ENCODE measurements at regions of chr10 and their contacts with region 1.

Region 1: DNA sequence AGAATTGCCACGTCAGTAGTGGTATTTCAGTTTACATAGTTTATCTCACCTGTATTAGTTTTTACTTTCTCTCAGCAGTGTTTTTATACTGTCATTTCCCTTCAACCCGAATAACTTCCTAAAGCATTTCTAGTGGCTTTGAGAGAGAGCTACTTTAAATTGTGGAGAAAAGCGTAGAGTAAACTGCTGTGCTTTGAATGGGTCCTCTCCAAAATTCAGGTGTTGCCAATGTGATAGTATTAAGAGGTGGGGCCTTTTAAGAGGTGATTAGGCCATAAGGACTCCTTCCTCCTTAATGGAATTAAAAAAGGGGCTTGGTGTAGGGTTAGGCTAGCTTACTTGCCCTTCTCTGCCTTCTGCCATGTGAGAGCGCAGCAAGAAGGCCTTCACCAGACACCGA is 98.4 kb downstream of the LCOR start:
- DNase-seq: no peak
- ATAC-seq: no peak
- H3K4me3 ChIP-seq: no peak overlapping the region
- H3K27ac ChIP-seq: no peak overlapping the region
- H3K4me1 ChIP-seq: no peaks in the 10 kb centered on the region
- H3K27me3 ChIP-seq: no peaks in the 10 kb centered on the region
- CTCF ChIP-seq: no peak

Region 2: DNA sequence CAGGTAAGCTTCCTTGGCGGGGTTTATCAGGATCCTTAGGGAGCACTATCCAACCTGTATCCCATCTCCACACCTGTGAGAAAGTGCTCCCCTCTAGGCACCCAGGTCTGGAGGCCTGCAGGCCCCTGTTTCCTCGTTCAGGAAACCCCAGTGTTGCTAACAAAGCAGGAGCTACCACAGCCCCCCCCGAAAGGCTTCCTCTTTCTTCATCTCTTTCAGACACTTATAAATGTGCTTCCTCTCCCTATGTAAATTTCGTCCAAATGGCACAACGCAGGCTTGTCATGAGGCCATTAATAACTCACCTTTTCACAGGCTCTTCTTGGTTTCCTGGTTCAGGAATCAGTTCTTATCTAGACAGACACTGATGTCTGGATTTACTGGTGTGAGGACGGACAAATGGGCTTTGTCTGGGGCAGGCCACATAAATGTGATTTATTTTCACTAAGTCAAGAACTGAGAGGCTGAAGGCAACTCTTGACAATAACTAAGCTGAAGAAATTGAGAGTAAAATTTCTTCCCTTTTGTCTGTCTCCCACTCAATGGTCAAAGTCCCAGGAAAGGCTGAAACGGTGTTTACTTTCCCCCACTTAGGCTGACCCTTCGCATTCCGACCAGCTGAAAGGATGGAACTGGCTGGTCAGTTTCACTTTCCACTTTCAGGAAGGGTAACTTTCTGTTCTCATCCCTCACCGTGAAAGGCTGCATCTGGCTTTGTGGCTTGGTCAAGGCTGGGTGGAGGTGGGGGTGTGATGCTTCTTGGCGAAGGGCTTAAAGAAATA is 257.0 kb before region 1 on chr10:
- CTCF ChIA-PET with region 1: no interaction called
- POLR2A ChIA-PET with region 1: interaction called, 10 read pairs
- in situ Hi-C with region 1: no loop called
- intact Hi-C with region 1: no loop called
- DNase-seq: no peak
- ATAC-seq: peak; percentile 47; the same call in 1 of the 2 replicates
- H3K4me3 ChIP-seq: peak overlapping the region in 1 of 2 experiments; percentile 0; a peak in 1 of 4 replicates
- H3K27ac ChIP-seq: peak overlapping the region; percentile 11; the same call in 1 of the 2 replicates
- H3K4me1 ChIP-seq: peaks cover 23% of the 10 kb centered on the region
- H3K27me3 ChIP-seq: no peaks in the 10 kb centered on the region
- CTCF ChIP-seq: no peak

Region 3: DNA sequence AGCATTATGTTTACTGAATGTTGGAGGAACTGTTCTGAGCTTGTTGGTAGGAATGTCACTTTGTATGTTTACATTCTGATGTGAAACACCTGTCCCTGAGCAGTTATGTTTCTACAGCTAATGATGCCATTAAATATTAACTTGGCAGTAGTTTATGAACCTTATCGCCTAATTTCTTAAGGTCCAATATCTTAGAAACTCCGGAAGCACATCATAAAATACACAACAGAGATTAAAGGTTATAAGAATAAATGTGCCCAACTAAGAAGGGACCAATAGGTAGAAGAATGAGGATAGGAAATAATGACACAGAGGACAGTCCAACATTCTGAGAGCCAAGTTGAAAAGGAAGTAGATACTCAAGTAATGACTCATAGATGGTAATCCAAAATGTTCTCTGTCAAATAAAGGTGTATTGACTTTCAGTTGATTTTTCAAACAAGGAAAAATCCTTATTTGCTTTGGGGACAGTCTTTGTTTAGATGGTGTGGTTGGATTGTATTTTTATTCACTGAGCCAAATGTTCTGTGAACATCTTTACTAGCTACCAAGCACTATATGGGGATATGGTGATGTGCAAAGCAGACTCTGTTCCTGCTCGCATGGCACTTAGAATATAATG is 66.4 kb before region 1 on chr10:
- CTCF ChIA-PET with region 1: no interaction called
- POLR2A ChIA-PET with region 1: interaction called, 14 read pairs
- in situ Hi-C with region 1: no loop called
- intact Hi-C with region 1: no loop called
- DNase-seq: peak; percentile 67
- ATAC-seq: peak; percentile 88
- H3K4me3 ChIP-seq: no peak overlapping the region
- H3K27ac ChIP-seq: no peak overlapping the region
- H3K4me1 ChIP-seq: peaks cover 17% of the 10 kb centered on the region
- H3K27me3 ChIP-seq: no peaks in the 10 kb centered on the region
- CTCF ChIP-seq: no peak

Region 4: GRCh38 chr10:97222326-97222961 is 292.0 kb after region 1 on chr10:
- CTCF ChIA-PET with region 1: no interaction called
- POLR2A ChIA-PET with region 1: no interaction called
- in situ Hi-C with region 1: no loop called
- intact Hi-C with region 1: no loop called
- DNase-seq: no peak
- ATAC-seq: no peak
- H3K4me3 ChIP-seq: no peak overlapping the region
- H3K27ac ChIP-seq: no peak overlapping the region
- H3K4me1 ChIP-seq: no peaks in the 10 kb centered on the region
- H3K27me3 ChIP-seq: no peaks in the 10 kb centered on the region
- CTCF ChIP-seq: no peak

Measured in Panc1 (cell line).